Gastrocnemius medialis (tissue), 4 donors: ENCODE measurements at regions of chr1 and their contacts with region 1.

Region 1: DNA sequence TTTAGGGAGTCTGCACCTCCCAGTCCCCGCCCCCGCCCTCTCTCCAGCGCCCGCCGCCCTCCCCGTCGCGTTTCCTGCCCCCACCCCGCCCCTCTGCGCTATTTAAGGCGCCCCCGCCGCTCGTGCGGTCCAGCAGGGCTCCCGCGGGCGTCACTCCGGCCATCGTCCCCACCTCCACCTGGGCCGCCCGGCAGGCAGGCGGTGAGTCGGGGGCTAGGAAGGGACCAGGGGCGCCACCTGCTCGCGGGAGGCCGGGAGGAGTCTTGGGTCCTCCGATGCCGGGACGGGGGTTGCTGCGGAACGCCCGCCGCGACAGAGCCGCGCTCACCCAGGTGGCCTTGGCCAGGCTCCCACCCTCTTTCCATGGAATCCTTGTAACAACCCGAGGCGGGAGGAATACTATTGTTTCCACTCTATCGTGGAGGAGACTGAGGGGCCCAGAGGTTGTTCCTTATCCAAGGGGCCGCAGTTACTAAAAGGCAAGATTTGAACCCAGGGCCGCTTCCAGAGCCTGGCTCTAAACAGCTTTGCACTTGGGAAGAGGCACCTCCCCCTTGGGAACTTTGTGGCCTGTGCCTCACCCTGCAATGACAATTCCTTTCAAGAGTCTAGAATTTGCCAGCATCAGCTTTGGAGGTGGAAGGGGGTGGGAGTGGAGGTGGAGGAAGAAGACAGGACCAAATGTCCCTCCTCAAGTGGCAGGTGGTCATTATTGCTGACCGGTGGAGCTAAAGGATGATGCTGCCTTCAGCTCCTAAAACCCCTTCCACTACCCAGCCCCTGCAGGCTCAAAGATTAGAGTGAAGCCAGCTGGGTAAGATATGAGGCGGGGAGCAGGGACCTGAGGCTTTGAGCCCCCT is at the start of gene GJA4:
- DNase-seq: no peak
- ATAC-seq: no peak
- H3K4me3 ChIP-seq: peak within 1 kb of the TSS; percentile 47 to 62 (median 55)
- H3K27ac ChIP-seq: peak within 1 kb of the TSS; percentile 65 to 79 (median 78)
- H3K4me1 ChIP-seq: peaks cover 3 to 11% of the 10 kb centered on the region in 2 donors
- H3K27me3 ChIP-seq: peaks cover 0 to 7% (median 2%) of the 10 kb centered on the region in 3 donors
- CTCF ChIP-seq: no peak
- POLR2A ChIP-seq: peak in 1 of 2 donors; percentile 42
- total RNA-seq, gene GJA4: 14.4 to 41.4 (median 27.7) TPM

Region 2: GRCh38 chr1:33944027-33944426 is 849.1 kb before region 1 on chr1:
- in situ Hi-C with region 1: no loop called
- intact Hi-C with region 1: no loop called
- DNase-seq: no peak
- ATAC-seq: no peak
- H3K4me3 ChIP-seq: no peak overlapping the region
- H3K27ac ChIP-seq: no peak overlapping the region
- H3K4me1 ChIP-seq: no peaks in the 10 kb centered on the region
- H3K27me3 ChIP-seq: no peaks in the 10 kb centered on the region
- CTCF ChIP-seq: no peak
- POLR2A ChIP-seq: no peak

Region 3: GRCh38 chr1:34839526-34840305 is 46.6 kb after region 1 on chr1:
- in situ Hi-C with region 1: no loop called
- intact Hi-C with region 1: loop called (anchors 5 kb)
- DNase-seq: no peak
- ATAC-seq: no peak
- H3K4me3 ChIP-seq: no peak overlapping the region
- H3K27ac ChIP-seq: peak overlapping the region in 2 of 4 donors; percentile 14 to 18
- H3K4me1 ChIP-seq: peaks cover 9 to 31% of the 10 kb centered on the region in 2 donors
- H3K27me3 ChIP-seq: no peaks in the 10 kb centered on the region
- CTCF ChIP-seq: no peak
- POLR2A ChIP-seq: no peak